Naive thymus-derived CD4-positive, alpha-beta T cell (primary cell): ENCODE measurements at regions of chr3 and their contacts with region 1.

Region 1: DNA sequence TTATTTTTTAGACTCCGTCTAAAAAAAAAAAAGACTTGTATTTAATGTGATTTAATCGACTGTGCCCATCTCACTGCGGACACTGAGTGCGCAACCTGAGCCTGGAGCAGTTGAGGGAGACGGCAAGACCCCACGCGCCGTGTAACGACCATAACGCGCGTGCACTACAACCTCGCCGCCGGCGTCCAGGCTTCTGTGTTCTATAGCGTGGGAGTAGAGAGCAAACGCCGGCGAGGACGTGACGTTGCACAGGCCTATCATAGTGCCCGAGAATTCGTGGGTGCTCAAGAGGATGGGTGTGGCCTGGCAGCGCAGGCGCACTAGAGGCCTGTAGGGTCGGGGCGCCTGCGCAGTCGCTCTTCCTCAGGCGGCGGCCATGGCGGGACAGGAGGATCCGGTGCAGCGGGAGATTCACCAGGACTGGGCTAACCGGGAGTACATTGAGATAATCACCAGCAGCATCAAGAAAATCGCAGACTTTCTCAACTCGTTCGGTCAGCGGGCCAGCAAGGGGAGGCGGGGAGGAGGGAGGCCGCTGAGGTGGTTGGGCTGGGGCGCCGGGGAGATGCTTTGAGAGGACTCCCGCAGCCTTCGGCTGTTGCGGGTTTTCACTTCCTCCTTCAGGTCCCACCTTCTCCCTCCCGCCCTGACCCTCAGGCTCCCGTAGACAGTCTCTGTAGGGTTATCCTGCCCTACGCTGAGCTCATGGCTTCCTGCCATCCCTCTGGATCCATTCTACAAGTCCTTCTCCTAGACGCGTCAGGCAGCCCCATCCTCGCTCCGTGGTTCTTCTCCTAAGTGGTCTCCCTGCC is at the start of gene BRK1:
- DNase-seq: peak; percentile 73 to 94 (median 91)
- ATAC-seq: peak; percentile 99
- H3K4me3 ChIP-seq: peak within 1 kb of the TSS; percentile 83
- H3K4me3 Mint-ChIP-seq: peak within 1 kb of the TSS; percentile 91 to 100 (median 98)
- H3K27ac ChIP-seq: peak within 1 kb of the TSS; percentile 85
- H3K27ac Mint-ChIP-seq: peak within 1 kb of the TSS; percentile 92 to 99 (median 98)
- H3K4me1 ChIP-seq: peaks cover 11 to 13% of the 10 kb centered on the region in 2 donors
- H3K4me1 Mint-ChIP-seq: peaks cover 23 to 48% (median 40%) of the 10 kb centered on the region in 7 donors
- H3K27me3 ChIP-seq: no peaks in the 10 kb centered on the region
- H3K27me3 Mint-ChIP-seq: peaks cover 0 to 2% (median 0%) of the 10 kb centered on the region in 5 donors
- total RNA-seq, gene BRK1: 40.9 to 117 (median 65.8) TPM

Region 2: DNA sequence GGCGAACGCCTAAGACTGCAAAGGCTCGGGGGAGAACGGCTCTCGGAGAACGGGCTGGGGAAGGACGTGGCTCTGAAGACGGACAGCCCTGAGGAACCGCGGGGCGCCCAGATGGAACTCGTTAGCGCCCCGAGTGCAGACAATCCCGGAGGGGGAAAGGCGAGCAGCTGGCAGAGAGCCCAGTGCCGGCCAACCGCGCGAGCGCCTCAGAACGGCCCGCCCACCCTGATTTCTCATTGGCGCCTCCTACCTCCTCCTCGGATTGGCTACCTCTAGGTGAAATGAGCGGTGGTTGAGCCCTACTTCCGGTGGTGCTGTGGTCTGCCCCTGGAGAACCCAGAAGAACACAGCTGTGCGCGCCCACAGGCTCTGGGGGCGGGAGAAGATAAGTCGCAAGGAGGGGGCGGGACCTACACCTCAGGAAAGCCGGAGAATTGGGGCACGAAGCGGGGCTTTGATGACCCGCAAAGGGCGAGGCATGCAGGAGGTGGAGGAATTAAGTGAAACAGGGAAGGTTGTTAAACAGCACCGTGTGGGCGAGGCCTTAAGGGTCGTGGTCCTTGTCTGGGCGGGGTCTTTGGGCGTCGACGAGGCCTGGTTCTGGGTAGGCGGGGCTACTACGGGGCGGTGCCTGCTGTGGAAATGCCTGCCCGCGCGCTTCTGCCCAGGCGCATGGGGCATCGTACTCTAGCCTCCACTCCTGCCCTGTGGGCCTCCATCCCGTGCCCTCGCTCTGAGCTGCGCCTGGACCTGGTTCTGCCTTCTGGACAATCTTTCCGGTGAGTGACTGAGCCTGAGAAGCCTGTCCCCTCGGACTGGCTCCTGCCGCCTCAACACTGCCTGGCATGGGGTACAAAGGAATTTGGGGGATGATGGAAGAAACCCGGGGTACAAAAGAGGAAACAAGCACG is 365.6 kb before region 1 on chr3 and contains the start of gene OGG1:
- CTCF ChIA-PET with region 1: no interaction called
- POLR2A ChIA-PET with region 1: no interaction called
- intact Hi-C with region 1: loop called in 1 of 2 experiments (anchors 1 kb)
- DNase-seq: peak; percentile 77 to 95 (median 94)
- ATAC-seq: peak; percentile 97
- H3K4me3 ChIP-seq: peak within 1 kb of the TSS; percentile 84
- H3K4me3 Mint-ChIP-seq: peak within 1 kb of the TSS; percentile 93 to 98 (median 96)
- H3K27ac ChIP-seq: peak within 1 kb of the TSS; percentile 73
- H3K27ac Mint-ChIP-seq: peak within 1 kb of the TSS; percentile 86 to 96 (median 93)
- H3K4me1 ChIP-seq: peaks cover 13 to 22% of the 10 kb centered on the region in 2 donors
- H3K4me1 Mint-ChIP-seq: peaks cover 30 to 58% (median 47%) of the 10 kb centered on the region in 7 donors
- H3K27me3 ChIP-seq: no peaks in the 10 kb centered on the region
- H3K27me3 Mint-ChIP-seq: no peaks in the 10 kb centered on the region
- total RNA-seq, gene OGG1: 18.8 to 42.9 (median 31.6) TPM

Region 3: GRCh38 chr3:10026084-10026890 is 89.2 kb before region 1 on chr3 and contains the start of gene FANCD2:
- CTCF ChIA-PET with region 1: no interaction called
- POLR2A ChIA-PET with region 1: no interaction called
- intact Hi-C with region 1: loop called (anchors 1 kb)
- DNase-seq: peak; percentile 88 to 99 (median 94)
- ATAC-seq: peak; percentile 95
- H3K4me3 ChIP-seq: peak within 1 kb of the TSS; percentile 96
- H3K4me3 Mint-ChIP-seq: peak within 1 kb of the TSS; percentile 93 to 99 (median 96)
- H3K27ac ChIP-seq: peak within 1 kb of the TSS; percentile 89
- H3K27ac Mint-ChIP-seq: peak within 1 kb of the TSS; percentile 86 to 98 (median 97)
- H3K4me1 ChIP-seq: peaks cover 11 to 13% of the 10 kb centered on the region in 2 donors
- H3K4me1 Mint-ChIP-seq: peaks cover 0 to 45% (median 29%) of the 10 kb centered on the region in 7 donors
- H3K27me3 ChIP-seq: no peaks in the 10 kb centered on the region
- H3K27me3 Mint-ChIP-seq: no peaks in the 10 kb centered on the region
- total RNA-seq, gene FANCD2: 18.3 to 41.5 (median 34.1) TPM

Region 4: GRCh38 chr3:10099041-10099440 is 16.5 kb before region 1 on chr3:
- CTCF ChIA-PET with region 1: no interaction called
- POLR2A ChIA-PET with region 1: no interaction called
- intact Hi-C with region 1: no loop called
- DNase-seq: no peak
- ATAC-seq: no peak
- H3K4me3 ChIP-seq: no peak overlapping the region
- H3K4me3 Mint-ChIP-seq: no peak overlapping the region
- H3K27ac ChIP-seq: no peak overlapping the region
- H3K27ac Mint-ChIP-seq: no peak overlapping the region
- H3K4me1 ChIP-seq: no peaks in the 10 kb centered on the region
- H3K4me1 Mint-ChIP-seq: no peaks in the 10 kb centered on the region
- H3K27me3 ChIP-seq: no peaks in the 10 kb centered on the region
- H3K27me3 Mint-ChIP-seq: no peaks in the 10 kb centered on the region

Region 5: GRCh38 chr3:10192953-10193691 is 77.6 kb after region 1 on chr3:
- CTCF ChIA-PET with region 1: no interaction called
- POLR2A ChIA-PET with region 1: interaction called, 12 read pairs
- intact Hi-C with region 1: loop called in 1 of 2 experiments (anchors 1 kb)
- DNase-seq: peak in 8 of 9 donors; percentile 35 to 68 (median 62)
- ATAC-seq: peak; percentile 24
- H3K4me3 ChIP-seq: peak overlapping the region; percentile 34
- H3K4me3 Mint-ChIP-seq: peak overlapping the region; percentile 70 to 90 (median 81)
- H3K27ac ChIP-seq: peak overlapping the region; percentile 75
- H3K27ac Mint-ChIP-seq: peak overlapping the region; percentile 90 to 98 (median 97)
- H3K4me1 ChIP-seq: peaks cover 78 to 86% of the 10 kb centered on the region in 2 donors
- H3K4me1 Mint-ChIP-seq: peaks cover 54 to 92% (median 85%) of the 10 kb centered on the region in 7 donors
- H3K27me3 ChIP-seq: no peaks in the 10 kb centered on the region
- H3K27me3 Mint-ChIP-seq: no peaks in the 10 kb centered on the region

Region 6: DNA sequence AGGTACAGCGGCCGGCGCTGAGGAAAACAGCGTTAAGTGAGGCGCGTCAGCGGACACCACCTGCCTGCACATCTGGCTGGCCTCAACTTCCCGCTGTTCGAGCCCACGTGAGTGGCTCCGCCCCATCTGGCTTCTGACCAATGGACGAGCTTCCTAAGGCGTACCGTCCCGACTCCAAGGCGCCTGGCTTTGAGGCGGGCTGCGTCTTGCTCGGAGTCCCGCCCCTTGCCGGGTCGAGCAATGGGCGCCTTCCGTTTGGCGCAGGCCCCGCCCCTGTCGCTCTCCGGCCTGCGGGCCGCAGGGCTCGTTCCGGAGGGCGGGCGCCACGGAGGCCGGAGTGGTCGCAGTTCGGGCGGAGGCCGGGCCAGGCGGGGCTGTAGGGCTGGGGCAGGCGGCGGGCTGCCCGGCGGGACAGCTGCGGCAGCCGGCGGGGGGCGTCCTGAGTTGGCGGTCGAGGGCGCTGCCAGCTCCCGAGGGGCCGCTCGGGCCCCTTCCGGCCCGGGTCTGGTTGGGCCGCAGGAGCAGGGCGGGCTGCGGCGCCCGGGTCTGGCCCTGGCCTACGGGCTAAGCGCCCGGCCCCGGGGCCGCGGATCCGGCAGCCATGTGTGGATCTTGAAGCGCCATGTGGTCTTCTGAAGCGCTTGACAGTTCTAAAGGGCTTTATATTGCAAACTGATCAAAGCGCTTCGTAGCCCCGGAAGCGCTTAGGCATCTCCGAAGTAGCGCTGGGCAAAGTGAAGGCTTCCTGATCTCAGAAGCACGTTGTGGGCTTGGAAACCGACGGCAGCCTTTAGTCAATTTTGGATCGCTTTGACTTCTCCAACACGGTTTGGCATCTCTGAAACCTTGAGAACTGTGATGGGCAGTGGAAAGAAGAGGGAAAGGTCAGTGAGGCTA is 132.9 kb after region 1 on chr3 and contains the start of gene TATDN2:
- CTCF ChIA-PET with region 1: no interaction called
- POLR2A ChIA-PET with region 1: interaction called, 4 read pairs
- intact Hi-C with region 1: loop called (anchors 1 kb)
- DNase-seq: peak; percentile 80 to 91 (median 88)
- ATAC-seq: peak; percentile 98
- H3K4me3 ChIP-seq: peak within 1 kb of the TSS; percentile 99
- H3K4me3 Mint-ChIP-seq: peak within 1 kb of the TSS; percentile 96 to 100 (median 99)
- H3K27ac ChIP-seq: peak within 1 kb of the TSS; percentile 80
- H3K27ac Mint-ChIP-seq: peak within 1 kb of the TSS; percentile 91 to 97 (median 95)
- H3K4me1 ChIP-seq: peaks cover 28 to 30% of the 10 kb centered on the region in 2 donors
- H3K4me1 Mint-ChIP-seq: peaks cover 44 to 63% (median 52%) of the 10 kb centered on the region in 7 donors
- H3K27me3 ChIP-seq: no peaks in the 10 kb centered on the region
- H3K27me3 Mint-ChIP-seq: no peaks in the 10 kb centered on the region
- total RNA-seq, gene TATDN2: 52.9 to 88.8 (median 71.6) TPM